ENCODE measurements at regions of chr1 and their contacts with region 1.

Region 1: DNA sequence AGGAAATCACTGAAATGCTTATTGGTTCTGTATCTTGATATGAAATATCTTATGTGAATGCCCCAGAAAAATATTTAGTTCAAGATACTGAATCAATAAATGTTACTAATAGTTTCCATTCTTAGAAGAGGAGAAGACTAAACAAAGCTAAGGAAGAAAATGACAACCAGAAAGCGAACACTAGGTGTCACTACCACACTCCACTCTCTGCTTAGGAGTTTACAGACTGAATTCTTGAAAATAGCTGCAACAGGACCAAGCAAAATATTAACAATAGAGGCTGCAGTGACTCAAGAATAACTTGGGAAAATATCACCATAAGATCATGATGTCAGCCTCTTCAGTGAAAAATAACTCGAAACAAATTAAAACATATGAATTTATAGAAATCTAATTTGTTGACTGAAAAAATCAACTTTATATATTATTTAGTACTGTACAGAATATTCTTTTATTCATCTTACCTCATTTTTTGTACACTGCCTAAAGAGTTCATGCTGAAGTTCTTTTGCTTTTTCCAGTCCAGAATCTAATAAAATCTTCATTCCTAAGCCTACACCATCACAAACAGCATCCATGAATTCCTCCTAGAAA is 61.6 kb downstream of the KIF14 start:
- DNase-seq: peak; percentile 42
- ATAC-seq: peak; percentile 49
- H3K4me3 Mint-ChIP-seq: no peak overlapping the region
- H3K27ac Mint-ChIP-seq: no peak overlapping the region
- H3K4me1 Mint-ChIP-seq: peaks cover 3% of the 10 kb centered on the region
- H3K27me3 Mint-ChIP-seq: no peaks in the 10 kb centered on the region
- CTCF ChIP-seq: peak; percentile 67

Region 2: GRCh38 chr1:200538179-200538578 is 20.8 kb before region 1 on chr1:
- CTCF ChIA-PET with region 1: interaction called, 15 read pairs
- POLR2A ChIA-PET with region 1: no interaction called
- intact Hi-C with region 1: no loop called
- DNase-seq: no peak
- ATAC-seq: no peak
- H3K4me3 Mint-ChIP-seq: no peak overlapping the region
- H3K27ac Mint-ChIP-seq: no peak overlapping the region
- H3K4me1 Mint-ChIP-seq: no peaks in the 10 kb centered on the region
- H3K27me3 Mint-ChIP-seq: no peaks in the 10 kb centered on the region
- CTCF ChIP-seq: no peak

Region 3: GRCh38 chr1:200628223-200628881 is 69.4 kb after region 1 on chr1:
- CTCF ChIA-PET with region 1: interaction called, 17 read pairs
- POLR2A ChIA-PET with region 1: no interaction called
- intact Hi-C with region 1: no loop called
- DNase-seq: peak; percentile 78
- ATAC-seq: peak; percentile 65
- H3K4me3 Mint-ChIP-seq: peak overlapping the region; percentile 28
- H3K27ac Mint-ChIP-seq: peak overlapping the region; percentile 32
- H3K4me1 Mint-ChIP-seq: peaks cover 38% of the 10 kb centered on the region
- H3K27me3 Mint-ChIP-seq: no peaks in the 10 kb centered on the region
- CTCF ChIP-seq: no peak

Region 4: GRCh38 chr1:200802865-200803512 is 244.0 kb after region 1 on chr1:
- CTCF ChIA-PET with region 1: interaction called, 12 read pairs
- POLR2A ChIA-PET with region 1: no interaction called
- intact Hi-C with region 1: loop called (anchors 5 kb)
- DNase-seq: peak; percentile 87
- ATAC-seq: peak; percentile 83
- H3K4me3 Mint-ChIP-seq: no peak overlapping the region
- H3K27ac Mint-ChIP-seq: no peak overlapping the region
- H3K4me1 Mint-ChIP-seq: no peaks in the 10 kb centered on the region
- H3K27me3 Mint-ChIP-seq: no peaks in the 10 kb centered on the region
- CTCF ChIP-seq: peak; percentile 91

Region 5: DNA sequence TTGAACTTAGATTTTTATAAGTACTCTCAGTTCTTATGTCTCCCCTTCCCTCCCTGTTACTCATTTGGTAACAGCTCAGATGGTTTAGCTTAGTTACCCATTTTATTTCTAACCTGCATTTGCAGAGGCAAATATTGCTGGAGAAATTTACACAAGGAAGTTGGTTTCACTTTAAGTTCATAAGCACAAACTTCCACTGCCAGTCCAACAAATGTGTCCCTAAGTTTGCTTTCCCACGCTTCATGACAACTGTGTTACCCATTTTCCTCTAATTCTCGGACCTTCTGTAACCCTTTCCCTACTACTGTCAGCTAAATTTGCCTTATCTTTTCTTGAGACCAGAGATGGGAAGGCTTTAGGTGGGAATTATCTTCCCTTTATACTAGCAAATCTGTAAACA is 249.9 kb after region 1 on chr1:
- CTCF ChIA-PET with region 1: interaction called, 10 read pairs
- POLR2A ChIA-PET with region 1: no interaction called
- intact Hi-C with region 1: loop called (anchors 5 kb)
- DNase-seq: no peak
- ATAC-seq: no peak
- H3K4me3 Mint-ChIP-seq: no peak overlapping the region
- H3K27ac Mint-ChIP-seq: no peak overlapping the region
- H3K4me1 Mint-ChIP-seq: no peaks in the 10 kb centered on the region
- H3K27me3 Mint-ChIP-seq: no peaks in the 10 kb centered on the region
- CTCF ChIP-seq: no peak